T-cell (primary cell): ENCODE measurements at regions of chr17 and their contacts with region 1.

Region 1: GRCh38 chr17:48751172-48751571 is 22.6 kb upstream of the HOXB13 start:
- DNase-seq: no peak
- ATAC-seq: no peak
- H3K4me3 ChIP-seq: no peak overlapping the region
- H3K4me3 Mint-ChIP-seq: no peak overlapping the region
- H3K27ac ChIP-seq: no peak overlapping the region
- H3K27ac Mint-ChIP-seq: no peak overlapping the region
- H3K4me1 ChIP-seq: peaks cover 2 to 35% of the 10 kb centered on the region in 2 experiments
- H3K4me1 Mint-ChIP-seq: peaks cover 19 to 30% (median 21%) of the 10 kb centered on the region in 3 donors
- H3K27me3 ChIP-seq: peaks cover 55 to 84% of the 10 kb centered on the region in 2 experiments
- H3K27me3 Mint-ChIP-seq: peaks cover 77 to 93% of the 10 kb centered on the region in 2 donors

Region 2: DNA sequence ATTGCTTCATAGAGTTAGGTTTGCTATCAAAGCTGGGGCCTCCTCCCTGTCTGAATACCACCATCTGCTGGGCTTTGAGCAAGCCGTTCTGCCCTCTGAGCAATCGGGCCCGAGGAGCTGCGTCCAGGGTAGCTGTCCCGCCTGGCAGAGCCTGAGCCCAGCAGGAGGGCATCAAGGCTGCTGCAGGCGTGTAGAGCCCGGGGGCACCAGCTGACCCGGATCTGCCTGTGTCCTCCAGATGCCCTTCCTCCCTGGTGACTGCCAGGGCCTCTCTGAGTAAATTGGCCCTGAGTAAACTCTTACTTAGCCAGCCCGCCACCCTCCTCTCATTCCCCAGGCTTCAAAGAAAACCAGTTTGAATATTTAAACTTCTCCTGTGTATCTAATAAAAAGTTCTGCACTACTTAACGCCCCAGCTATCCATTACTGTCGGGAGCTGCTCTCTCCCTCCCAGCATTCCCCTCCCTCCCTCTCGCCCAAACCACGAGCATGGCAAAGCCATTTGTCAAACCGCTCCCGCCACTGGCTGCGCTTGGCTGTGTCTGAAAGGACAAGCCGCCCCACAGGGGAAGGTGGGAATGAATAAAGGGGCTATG is 763.8 kb before region 1 on chr17:
- CTCF ChIA-PET with region 1: no interaction called
- POLR2A ChIA-PET with region 1: no interaction called
- DNase-seq: no peak
- ATAC-seq: no peak
- H3K4me3 ChIP-seq: no peak overlapping the region
- H3K4me3 Mint-ChIP-seq: no peak overlapping the region
- H3K27ac ChIP-seq: no peak overlapping the region
- H3K27ac Mint-ChIP-seq: no peak overlapping the region
- H3K4me1 ChIP-seq: peaks cover 0 to 7% of the 10 kb centered on the region in 2 experiments
- H3K4me1 Mint-ChIP-seq: peaks cover 0 to 6% (median 0%) of the 10 kb centered on the region in 3 donors
- H3K27me3 ChIP-seq: peaks cover 0 to 8% of the 10 kb centered on the region in 2 experiments
- H3K27me3 Mint-ChIP-seq: no peaks in the 10 kb centered on the region

Region 3: DNA sequence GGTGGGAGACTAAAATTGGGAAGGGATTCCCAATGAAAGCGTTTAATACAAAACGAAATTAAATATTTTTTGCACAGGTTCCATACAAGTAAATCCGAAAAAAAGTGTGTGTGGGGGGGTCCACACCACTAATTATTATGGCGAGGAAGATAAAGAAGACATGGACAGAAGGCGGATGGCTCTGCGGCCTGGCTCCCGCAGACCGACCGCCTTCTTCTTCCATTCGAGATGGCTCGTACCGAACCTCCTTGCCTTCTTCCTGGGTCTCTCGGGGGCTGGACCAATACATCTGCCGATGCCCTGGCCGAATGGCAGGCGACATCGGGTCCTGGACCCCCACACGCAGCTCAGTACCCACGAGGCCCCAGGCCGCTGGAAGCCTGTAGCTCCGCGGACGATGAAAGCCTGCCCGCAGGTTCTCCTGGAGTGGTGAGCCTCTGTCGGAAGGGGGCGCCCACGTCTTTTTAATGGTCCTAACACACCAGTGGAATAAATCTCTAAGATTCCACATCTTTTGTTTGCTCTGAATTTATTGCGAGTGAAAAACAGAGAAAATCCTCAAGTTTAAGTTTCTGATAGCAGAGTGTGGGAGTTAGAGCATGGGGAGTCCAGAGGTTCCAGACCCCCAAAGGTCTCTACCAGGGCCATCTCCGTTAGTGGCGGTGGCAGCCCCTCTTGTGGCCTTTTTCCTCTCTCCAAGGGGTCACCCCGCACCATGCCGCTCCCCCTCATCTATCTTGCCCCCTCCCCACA is 26.7 kb before region 1 on chr17:
- CTCF ChIA-PET with region 1: interaction called, 4 to 14 read pairs
- POLR2A ChIA-PET with region 1: no interaction called
- DNase-seq: peak; percentile 35 to 83 (median 69)
- ATAC-seq: peak; percentile 61 to 80 (median 70)
- H3K4me3 ChIP-seq: peak overlapping the region in 1 of 2 donors; percentile 61
- H3K4me3 Mint-ChIP-seq: peak overlapping the region; percentile 57 to 78 (median 63)
- H3K27ac ChIP-seq: no peak overlapping the region
- H3K27ac Mint-ChIP-seq: no peak overlapping the region
- H3K4me1 ChIP-seq: peaks cover 4 to 64% of the 10 kb centered on the region in 2 experiments
- H3K4me1 Mint-ChIP-seq: peaks cover 40 to 65% (median 47%) of the 10 kb centered on the region in 3 donors
- H3K27me3 ChIP-seq: peaks cover 28 to 99% of the 10 kb centered on the region in 2 experiments
- H3K27me3 Mint-ChIP-seq: peaks cover 78 to 94% of the 10 kb centered on the region in 2 donors